ENCODE measurements at regions of chr11 and their contacts with region 1.

Region 1: GRCh38 chr11:132451942-132452601 is 1080.2 kb downstream of the OPCML start:
- DNase-seq: no peak
- H3K4me3 ChIP-seq: no peak overlapping the region
- H3K27ac ChIP-seq: no peak overlapping the region
- H3K4me1 ChIP-seq: no peaks in the 10 kb centered on the region
- H3K27me3 ChIP-seq: no peaks in the 10 kb centered on the region
- CTCF ChIP-seq: no peak
- EP300 ChIP-seq: no peak
- POLR2A ChIP-seq: no peak

Region 2: DNA sequence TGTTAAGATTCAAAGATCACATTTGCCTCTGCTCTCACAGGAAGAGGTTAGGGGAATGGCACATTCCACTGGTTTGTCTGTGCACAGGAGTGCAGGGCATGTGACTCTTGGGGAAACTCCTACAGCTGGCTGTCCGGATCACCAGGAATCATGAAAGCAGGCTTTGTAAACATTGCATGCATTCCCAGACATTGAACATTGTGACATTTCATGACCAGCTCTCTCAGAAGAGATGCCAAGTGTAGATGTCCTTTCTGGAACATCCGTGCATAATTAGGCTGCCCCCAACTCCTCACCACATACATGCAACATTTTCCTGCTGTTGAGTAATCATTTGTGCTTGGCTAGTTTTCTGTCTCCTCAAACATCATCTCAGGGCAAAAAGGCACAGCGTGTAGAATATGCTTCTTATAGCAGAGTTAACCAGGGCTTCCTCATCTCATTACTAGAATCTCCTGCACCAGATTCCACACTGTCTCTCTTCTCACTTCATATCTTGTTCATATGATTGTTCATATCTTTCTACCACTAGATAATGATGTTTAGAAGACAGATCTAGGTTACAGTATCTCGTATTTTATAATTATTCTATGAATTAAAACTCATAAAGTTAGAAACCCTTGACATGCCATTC is 387.0 kb before region 1 on chr11:
- in situ Hi-C with region 1: no loop called
- intact Hi-C with region 1: no loop called
- DNase-seq: no peak
- H3K4me3 ChIP-seq: no peak overlapping the region
- H3K27ac ChIP-seq: no peak overlapping the region
- H3K4me1 ChIP-seq: no peaks in the 10 kb centered on the region
- H3K27me3 ChIP-seq: no peaks in the 10 kb centered on the region
- CTCF ChIP-seq: no peak
- EP300 ChIP-seq: no peak
- POLR2A ChIP-seq: no peak

Region 3: GRCh38 chr11:132421555-132421954 is 30.5 kb before region 1 on chr11:
- in situ Hi-C with region 1: no loop called
- intact Hi-C with region 1: loop called (anchors 1 kb)
- DNase-seq: no peak
- H3K4me3 ChIP-seq: no peak overlapping the region
- H3K27ac ChIP-seq: no peak overlapping the region
- H3K4me1 ChIP-seq: no peaks in the 10 kb centered on the region
- H3K27me3 ChIP-seq: no peaks in the 10 kb centered on the region
- CTCF ChIP-seq: no peak
- EP300 ChIP-seq: no peak
- POLR2A ChIP-seq: no peak

Region 4: GRCh38 chr11:132770829-132771515 is 318.9 kb after region 1 on chr11:
- in situ Hi-C with region 1: no loop called
- intact Hi-C with region 1: no loop called
- DNase-seq: no peak
- H3K4me3 ChIP-seq: no peak overlapping the region
- H3K27ac ChIP-seq: no peak overlapping the region
- H3K4me1 ChIP-seq: no peaks in the 10 kb centered on the region
- H3K27me3 ChIP-seq: no peaks in the 10 kb centered on the region
- CTCF ChIP-seq: no peak
- EP300 ChIP-seq: no peak
- POLR2A ChIP-seq: no peak